Caco-2 (cell line): ENCODE measurements at regions of chr12 and their contacts with region 1.

Region 1: GRCh38 chr12:100827901-100828520 is 33.4 kb downstream of the ANO4 start:
- DNase-seq: peak in 1 of 2 experiments; percentile 35
- H3K4me3 ChIP-seq: no peak overlapping the region
- H3K4me3 Mint-ChIP-seq: no peak overlapping the region
- H3K27ac Mint-ChIP-seq: no peak overlapping the region
- H3K4me1 ChIP-seq: no peaks in the 10 kb centered on the region
- H3K4me1 Mint-ChIP-seq: no peaks in the 10 kb centered on the region
- H3K27me3 ChIP-seq: no peaks in the 10 kb centered on the region
- H3K27me3 Mint-ChIP-seq: no peaks in the 10 kb centered on the region
- CTCF ChIP-seq: peak; percentile 68 to 71

Region 2: GRCh38 chr12:100356644-100357223 is 471.3 kb before region 1 on chr12 and contains the start of gene SLC17A8:
- CTCF ChIA-PET with region 1: no interaction called
- POLR2A ChIA-PET with region 1: no interaction called
- intact Hi-C with region 1: no loop called
- DNase-seq: no peak
- H3K4me3 ChIP-seq: no peak within 1 kb of the TSS
- H3K4me3 Mint-ChIP-seq: no peak within 1 kb of the TSS
- H3K27ac Mint-ChIP-seq: no peak within 1 kb of the TSS
- H3K4me1 ChIP-seq: no peaks in the 10 kb centered on the region
- H3K4me1 Mint-ChIP-seq: no peaks in the 10 kb centered on the region
- H3K27me3 ChIP-seq: no peaks in the 10 kb centered on the region
- H3K27me3 Mint-ChIP-seq: peaks cover 21% of the 10 kb centered on the region
- CTCF ChIP-seq: no peak
- total RNA-seq, gene SLC17A8: not detected in 2 replicates

Region 3: DNA sequence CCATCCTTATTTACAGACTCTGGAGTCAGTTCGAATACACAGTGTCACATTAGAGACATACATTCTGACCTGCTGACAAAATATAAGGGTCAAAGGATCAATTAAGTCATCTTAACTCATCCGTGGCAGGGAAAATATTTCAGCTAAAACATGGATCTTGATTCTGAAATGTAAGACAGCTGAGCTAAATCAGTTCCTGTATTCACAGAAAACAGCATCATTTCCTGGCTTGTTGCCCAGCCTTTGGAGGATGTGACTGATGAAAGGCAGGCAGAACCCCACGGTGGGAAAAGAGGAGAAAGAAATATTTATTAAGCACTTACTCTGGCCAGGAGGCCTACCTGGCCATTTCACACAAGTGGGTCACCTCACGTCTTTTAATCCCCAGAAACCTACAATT is 152.6 kb before region 1 on chr12:
- CTCF ChIA-PET with region 1: no interaction called
- POLR2A ChIA-PET with region 1: no interaction called
- intact Hi-C with region 1: no loop called
- DNase-seq: no peak
- H3K4me3 ChIP-seq: no peak overlapping the region
- H3K4me3 Mint-ChIP-seq: no peak overlapping the region
- H3K27ac Mint-ChIP-seq: no peak overlapping the region
- H3K4me1 ChIP-seq: no peaks in the 10 kb centered on the region
- H3K4me1 Mint-ChIP-seq: peaks cover 6% of the 10 kb centered on the region
- H3K27me3 ChIP-seq: no peaks in the 10 kb centered on the region
- H3K27me3 Mint-ChIP-seq: peaks cover 14% of the 10 kb centered on the region
- CTCF ChIP-seq: no peak

Region 4: DNA sequence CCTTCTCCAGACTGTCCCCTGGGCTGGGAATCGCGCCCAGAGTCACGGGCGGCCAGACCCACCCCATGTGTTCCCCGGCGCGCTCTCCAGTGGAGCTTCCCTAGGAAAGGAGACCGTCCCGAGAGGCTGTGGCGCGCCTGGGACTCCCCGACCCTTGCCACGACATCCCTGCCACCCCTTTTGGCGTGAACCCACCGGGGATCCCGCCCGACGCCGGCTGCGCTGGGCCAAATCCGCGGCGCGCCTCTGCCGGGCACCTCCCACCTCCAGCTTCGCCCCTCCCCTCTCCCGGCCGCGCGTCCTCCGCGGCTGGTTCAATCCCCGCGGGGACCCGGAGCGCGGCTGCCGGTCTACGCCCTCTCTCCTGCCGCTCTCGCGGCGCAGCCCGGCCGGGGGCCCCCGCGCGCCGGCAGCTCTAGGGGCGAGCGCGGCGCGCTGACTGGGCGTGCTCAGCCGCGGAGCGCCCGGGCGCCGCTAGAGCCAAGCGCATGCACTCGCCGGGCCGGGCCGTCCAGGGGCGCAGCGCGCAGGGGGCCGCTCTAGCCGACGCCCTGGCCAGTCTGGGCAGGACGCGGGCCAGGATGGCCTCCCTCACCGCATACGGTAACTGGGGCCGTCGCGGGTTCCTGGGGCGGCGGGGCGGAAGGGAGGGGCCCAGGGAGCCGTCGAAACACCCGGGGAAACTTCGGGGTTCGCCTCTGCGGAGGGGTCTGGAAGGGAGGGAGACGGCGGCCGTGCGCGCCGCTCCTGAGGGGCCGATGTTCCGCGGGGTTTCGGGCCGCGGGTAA is 110.9 kb before region 1 on chr12:
- CTCF ChIA-PET with region 1: no interaction called
- POLR2A ChIA-PET with region 1: no interaction called
- intact Hi-C with region 1: no loop called
- DNase-seq: no peak
- H3K4me3 ChIP-seq: no peak overlapping the region
- H3K4me3 Mint-ChIP-seq: peak overlapping the region; percentile 34
- H3K27ac Mint-ChIP-seq: no peak overlapping the region
- H3K4me1 ChIP-seq: no peaks in the 10 kb centered on the region
- H3K4me1 Mint-ChIP-seq: no peaks in the 10 kb centered on the region
- H3K27me3 ChIP-seq: no peaks in the 10 kb centered on the region
- H3K27me3 Mint-ChIP-seq: peaks cover 23% of the 10 kb centered on the region
- CTCF ChIP-seq: no peak

Region 5: GRCh38 chr12:100987552-100988521 is 159.8 kb after region 1 on chr12:
- CTCF ChIA-PET with region 1: no interaction called
- POLR2A ChIA-PET with region 1: no interaction called
- intact Hi-C with region 1: loop called (anchors 10 kb)
- DNase-seq: peak; percentile 40 to 45
- H3K4me3 ChIP-seq: no peak overlapping the region
- H3K4me3 Mint-ChIP-seq: no peak overlapping the region
- H3K27ac Mint-ChIP-seq: no peak overlapping the region
- H3K4me1 ChIP-seq: no peaks in the 10 kb centered on the region; the same call in 1 of the 2 replicates
- H3K4me1 Mint-ChIP-seq: no peaks in the 10 kb centered on the region
- H3K27me3 ChIP-seq: no peaks in the 10 kb centered on the region
- H3K27me3 Mint-ChIP-seq: peaks cover 9% of the 10 kb centered on the region
- CTCF ChIP-seq: peak; percentile 30 to 55

Region 6: DNA sequence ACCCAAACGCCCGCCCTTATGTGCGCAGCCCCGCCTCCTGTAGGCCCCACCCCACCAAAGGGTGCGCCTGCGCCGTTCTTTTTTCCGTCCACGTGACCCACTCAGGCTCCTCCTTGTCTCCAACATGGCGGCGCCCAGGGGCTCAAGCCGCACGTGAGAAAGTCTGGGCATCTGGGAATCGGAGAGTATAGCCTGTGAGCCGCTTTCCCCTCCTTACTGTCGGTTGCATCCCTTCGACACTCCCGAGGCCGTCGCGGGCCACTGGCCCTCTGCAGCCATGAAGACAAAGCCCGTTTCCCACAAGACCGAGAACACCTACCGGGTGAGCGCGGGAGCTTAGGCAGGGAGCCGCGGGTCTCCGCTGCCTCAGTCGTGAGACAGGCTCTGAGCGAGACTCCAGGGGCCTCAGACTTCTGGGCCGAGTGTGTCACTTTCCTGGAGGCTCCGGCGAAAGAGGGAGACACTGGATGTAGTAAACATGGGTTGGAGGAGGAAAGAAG is 452.0 kb after region 1 on chr12 and contains the start of gene UTP20:
- CTCF ChIA-PET with region 1: no interaction called
- POLR2A ChIA-PET with region 1: no interaction called
- intact Hi-C with region 1: loop called (anchors 2 kb)
- DNase-seq: peak; percentile 91 to 93
- H3K4me3 ChIP-seq: peak within 1 kb of the TSS; percentile 84
- H3K4me3 Mint-ChIP-seq: peak within 1 kb of the TSS; percentile 89
- H3K27ac Mint-ChIP-seq: peak within 1 kb of the TSS; percentile 90
- H3K4me1 ChIP-seq: 0 out of 2 replicates have a peak, but pooled peaks cover 4% of the 10 kb centered on the region
- H3K4me1 Mint-ChIP-seq: peaks cover 7% of the 10 kb centered on the region
- H3K27me3 ChIP-seq: no peaks in the 10 kb centered on the region; the same call in 1 of the 2 replicates
- H3K27me3 Mint-ChIP-seq: peaks cover 4% of the 10 kb centered on the region
- CTCF ChIP-seq: no peak
- total RNA-seq, gene UTP20: 23.7 and 24.9 TPM in 2 replicates

Region 7: GRCh38 chr12:101323255-101323654 is 495.2 kb after region 1 on chr12:
- CTCF ChIA-PET with region 1: no interaction called
- POLR2A ChIA-PET with region 1: no interaction called
- intact Hi-C with region 1: loop called (anchors 1 kb)
- DNase-seq: no peak
- H3K4me3 ChIP-seq: no peak overlapping the region
- H3K4me3 Mint-ChIP-seq: no peak overlapping the region
- H3K27ac Mint-ChIP-seq: no peak overlapping the region
- H3K4me1 ChIP-seq: no peaks in the 10 kb centered on the region
- H3K4me1 Mint-ChIP-seq: no peaks in the 10 kb centered on the region
- H3K27me3 ChIP-seq: no peaks in the 10 kb centered on the region
- H3K27me3 Mint-ChIP-seq: no peaks in the 10 kb centered on the region
- CTCF ChIP-seq: no peak